H1 (cell line): ENCODE measurements at regions of chr6 and their contacts with region 1.

Region 1: DNA sequence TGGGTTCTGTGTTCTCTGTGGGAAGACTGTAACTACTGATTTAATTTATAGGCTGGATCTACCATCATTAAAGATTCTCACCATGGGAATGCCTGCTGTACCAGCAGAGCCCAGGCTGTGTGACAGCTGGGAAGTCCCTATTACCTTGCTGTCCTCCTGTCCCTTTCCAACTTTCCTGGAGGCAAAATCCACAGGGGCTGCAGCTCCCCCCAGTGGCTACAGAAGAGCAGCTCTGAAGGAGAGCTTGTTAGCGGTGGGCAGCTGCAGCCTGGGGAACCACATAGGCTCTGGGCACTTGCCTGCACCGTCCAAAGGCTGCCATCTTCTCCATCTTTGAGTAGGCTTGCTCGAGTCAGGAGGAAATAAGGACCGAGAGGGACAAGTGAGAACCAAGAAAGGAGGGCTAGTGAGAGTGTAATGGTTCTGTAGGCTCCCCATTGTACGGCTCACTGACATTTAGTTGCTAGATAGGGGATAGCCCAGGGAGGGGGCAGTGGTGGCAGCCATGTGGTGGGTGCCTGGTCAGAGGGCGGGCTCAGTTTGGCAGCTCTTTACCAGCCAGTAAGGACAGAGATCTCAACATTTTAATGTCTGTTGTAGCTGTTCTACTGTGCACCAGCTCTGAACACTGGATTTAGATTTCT is 155.1 kb upstream of the MLIP start:
- DNase-seq: peak; percentile 73 to 86
- H3K4me3 ChIP-seq: no peak overlapping the region
- H3K27ac ChIP-seq: no peak overlapping the region
- H3K4me1 ChIP-seq: no peaks in the 10 kb centered on the region; a peak in 1 of 7 replicates
- H3K27me3 ChIP-seq: no peaks in the 10 kb centered on the region
- CTCF ChIP-seq: peak; percentile 86 to 95 (median 93)
- EP300 ChIP-seq: no peak
- POLR2A ChIP-seq: no peak
- RAD21 ChIP-seq: peak; percentile 98

Region 2: GRCh38 chr6:53746442-53747103 is 209.6 kb before region 1 on chr6:
- CTCF ChIA-PET with region 1: interaction called, 10 read pairs
- POLR2A ChIA-PET with region 1: no interaction called
- DNase-seq: no peak
- H3K4me3 ChIP-seq: no peak overlapping the region
- H3K27ac ChIP-seq: no peak overlapping the region
- H3K4me1 ChIP-seq: no peaks in the 10 kb centered on the region; a peak in 1 of 7 replicates
- H3K27me3 ChIP-seq: no peaks in the 10 kb centered on the region
- CTCF ChIP-seq: no peak
- EP300 ChIP-seq: no peak
- POLR2A ChIP-seq: no peak
- RAD21 ChIP-seq: no peak

Region 3: GRCh38 chr6:53771785-53772624 is 184.2 kb before region 1 on chr6:
- CTCF ChIA-PET with region 1: interaction called, 19 read pairs
- POLR2A ChIA-PET with region 1: no interaction called
- DNase-seq: no peak
- H3K4me3 ChIP-seq: no peak overlapping the region
- H3K27ac ChIP-seq: no peak overlapping the region
- H3K4me1 ChIP-seq: no peaks in the 10 kb centered on the region
- H3K27me3 ChIP-seq: no peaks in the 10 kb centered on the region
- CTCF ChIP-seq: no peak
- EP300 ChIP-seq: no peak
- POLR2A ChIP-seq: no peak
- RAD21 ChIP-seq: no peak

Region 4: GRCh38 chr6:53811082-53811481 is 145.1 kb before region 1 on chr6:
- CTCF ChIA-PET with region 1: interaction called, 10 read pairs
- POLR2A ChIA-PET with region 1: no interaction called
- DNase-seq: no peak
- H3K4me3 ChIP-seq: no peak overlapping the region
- H3K27ac ChIP-seq: no peak overlapping the region
- H3K4me1 ChIP-seq: peaks cover 0 to 20% (median 10%) of the 10 kb centered on the region in 4 experiments; a peak in 6 of 7 replicates
- H3K27me3 ChIP-seq: no peaks in the 10 kb centered on the region
- CTCF ChIP-seq: no peak
- EP300 ChIP-seq: no peak
- POLR2A ChIP-seq: no peak
- RAD21 ChIP-seq: no peak

Region 5: GRCh38 chr6:53873922-53874321 is 82.3 kb before region 1 on chr6:
- CTCF ChIA-PET with region 1: no interaction called
- POLR2A ChIA-PET with region 1: no interaction called
- DNase-seq: no peak
- H3K4me3 ChIP-seq: no peak overlapping the region
- H3K27ac ChIP-seq: no peak overlapping the region
- H3K4me1 ChIP-seq: peaks cover 0 to 2% (median 0%) of the 10 kb centered on the region in 4 experiments; a peak in 1 of 7 replicates
- H3K27me3 ChIP-seq: no peaks in the 10 kb centered on the region
- CTCF ChIP-seq: no peak
- EP300 ChIP-seq: no peak
- POLR2A ChIP-seq: no peak
- RAD21 ChIP-seq: no peak

Region 6: DNA sequence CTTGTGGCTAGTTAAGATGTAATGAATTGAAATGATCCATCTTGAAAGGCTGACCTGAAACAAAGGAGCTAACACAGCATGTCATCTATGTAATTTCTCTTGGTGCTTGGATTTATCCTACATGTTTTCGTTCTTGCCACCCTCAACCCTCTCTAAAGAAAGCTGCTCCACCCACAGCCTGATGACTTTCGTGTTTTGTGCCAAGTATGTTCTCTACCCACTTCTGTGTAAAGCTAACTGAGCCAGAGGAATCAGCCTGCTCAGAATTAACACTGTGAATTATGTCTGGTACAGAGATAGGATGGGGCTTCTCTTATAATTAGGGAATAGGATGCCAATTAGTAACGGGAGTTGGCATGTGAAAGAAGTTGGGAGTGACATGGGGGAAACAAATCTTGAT is 87.2 kb after region 1 on chr6:
- CTCF ChIA-PET with region 1: no interaction called
- POLR2A ChIA-PET with region 1: no interaction called
- DNase-seq: no peak
- H3K4me3 ChIP-seq: no peak overlapping the region
- H3K27ac ChIP-seq: no peak overlapping the region
- H3K4me1 ChIP-seq: no peaks in the 10 kb centered on the region
- H3K27me3 ChIP-seq: no peaks in the 10 kb centered on the region
- CTCF ChIP-seq: no peak
- EP300 ChIP-seq: no peak
- POLR2A ChIP-seq: no peak
- RAD21 ChIP-seq: no peak